ENCODE measurements at regions of chr6 and their contacts with region 1.

Region 1: DNA sequence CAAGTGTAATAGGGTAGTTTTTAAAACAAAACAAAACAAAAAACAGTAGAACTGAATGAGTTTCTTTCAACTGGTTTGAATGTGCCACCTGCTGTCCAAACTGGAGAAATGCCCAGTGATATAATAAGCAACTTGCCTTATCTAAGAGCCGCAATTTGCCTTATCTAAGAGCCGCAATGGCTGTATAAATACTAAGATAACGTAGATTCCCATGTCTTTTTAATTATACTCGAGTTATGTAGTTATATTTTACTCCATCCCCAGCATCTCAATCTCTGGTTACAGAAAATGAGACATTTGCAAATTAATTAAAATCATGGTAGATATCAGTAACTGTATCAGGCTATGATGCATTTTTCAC is 67.2 kb downstream of the RPP40 start:
- DNase-seq: no peak

Region 2: GRCh38 chr6:4775584-4776494 is 160.8 kb before region 1 on chr6 and contains the start of gene CDYL:
- intact Hi-C with region 1: loop called (anchors 10 kb)
- DNase-seq: peak; percentile 93
- total RNA-seq, gene CDYL: 36.3 TPM

Region 3: DNA sequence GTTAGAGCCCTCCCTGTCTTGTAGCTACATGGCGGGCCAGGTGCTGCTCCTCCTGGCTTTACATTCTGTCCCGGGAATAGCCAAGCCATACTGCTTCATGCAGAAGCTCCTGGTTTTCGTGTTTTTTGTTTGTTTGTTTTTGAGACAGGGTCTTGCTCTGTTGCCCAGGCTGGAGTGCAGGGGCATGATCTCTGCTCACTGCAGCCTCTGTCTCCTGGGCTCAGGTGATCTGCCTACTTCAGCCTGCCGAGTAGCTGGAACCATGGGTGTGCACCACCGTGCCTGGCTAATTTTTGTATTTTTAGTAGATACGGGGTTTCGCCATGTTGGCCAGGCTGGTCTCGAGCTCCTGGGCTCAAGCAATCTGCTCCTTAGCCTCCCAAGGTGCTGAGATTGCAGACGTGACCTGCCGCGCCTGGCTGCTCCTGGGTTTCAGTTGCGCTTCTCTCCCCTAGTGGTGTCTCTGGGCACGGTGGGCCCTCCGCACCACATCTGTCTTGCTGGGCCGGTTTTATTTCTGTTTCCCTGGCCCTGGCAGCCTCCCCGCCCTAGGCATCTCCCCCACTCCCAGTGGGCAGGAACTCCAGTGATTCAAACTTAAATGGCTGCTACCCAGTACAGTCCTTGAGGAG is 147.6 kb before region 1 on chr6:
- intact Hi-C with region 1: no loop called
- DNase-seq: no peak